ENCODE measurements at regions of chr2 and their contacts with region 1.

Region 1: GRCh38 chr2:53018825-53019425 is 748.7 kb upstream of the CHAC2 start:
- DNase-seq: no peak
- ATAC-seq: peak; percentile 83
- H3K4me3 Mint-ChIP-seq: no peak overlapping the region
- H3K27ac Mint-ChIP-seq: no peak overlapping the region
- H3K4me1 Mint-ChIP-seq: peaks cover 4% of the 10 kb centered on the region; the same call in 1 of the 2 replicates
- H3K27me3 Mint-ChIP-seq: no peaks in the 10 kb centered on the region
- CTCF ChIP-seq: no peak

Region 2: GRCh38 chr2:53188851-53189510 is 170.1 kb after region 1 on chr2:
- CTCF ChIA-PET with region 1: no interaction called
- POLR2A ChIA-PET with region 1: no interaction called
- DNase-seq: no peak
- ATAC-seq: no peak
- H3K4me3 Mint-ChIP-seq: no peak overlapping the region
- H3K27ac Mint-ChIP-seq: no peak overlapping the region
- H3K4me1 Mint-ChIP-seq: no peaks in the 10 kb centered on the region; the same call in 1 of the 2 replicates
- H3K27me3 Mint-ChIP-seq: no peaks in the 10 kb centered on the region
- CTCF ChIP-seq: no peak

Region 3: DNA sequence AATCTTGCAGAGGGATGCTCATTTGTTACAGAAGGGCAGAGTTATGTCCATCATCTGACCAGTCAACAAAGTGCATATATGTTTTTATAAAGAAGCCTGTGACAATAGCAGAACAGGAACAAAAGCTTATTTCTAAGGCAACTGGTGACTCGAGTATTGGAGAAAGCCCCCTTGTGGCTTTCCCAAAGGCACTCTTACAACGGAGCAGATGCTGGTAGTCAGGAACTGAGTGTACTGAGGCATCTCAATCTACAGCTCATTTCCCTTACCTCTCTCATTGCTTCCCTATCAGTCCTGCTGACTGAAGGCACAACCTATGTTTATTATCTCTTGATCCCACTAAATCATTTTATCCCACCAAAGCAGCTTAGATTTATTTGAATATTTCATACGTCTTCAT is 191.6 kb after region 1 on chr2:
- CTCF ChIA-PET with region 1: interaction called, 26 read pairs
- POLR2A ChIA-PET with region 1: no interaction called
- DNase-seq: no peak
- ATAC-seq: peak; percentile 86
- H3K4me3 Mint-ChIP-seq: no peak overlapping the region
- H3K27ac Mint-ChIP-seq: no peak overlapping the region
- H3K4me1 Mint-ChIP-seq: no peaks in the 10 kb centered on the region
- H3K27me3 Mint-ChIP-seq: no peaks in the 10 kb centered on the region
- CTCF ChIP-seq: no peak

Measured in WTC11 (cell line).